Tibial artery (tissue), 4 donors: ENCODE measurements at regions of chr18 and their contacts with region 1.

Region 1: GRCh38 chr18:32349728-32350395 is 120.8 kb downstream of the GAREM1 start:
- DNase-seq: peak; percentile 82 to 85
- H3K4me3 ChIP-seq: peak overlapping the region; percentile 34
- H3K27ac ChIP-seq: peak overlapping the region; percentile 68 to 69
- H3K4me1 ChIP-seq: peaks cover 0 to 62% (median 29%) of the 10 kb centered on the region in 4 donors
- H3K27me3 ChIP-seq: no peaks in the 10 kb centered on the region
- CTCF ChIP-seq: no peak

Region 2: DNA sequence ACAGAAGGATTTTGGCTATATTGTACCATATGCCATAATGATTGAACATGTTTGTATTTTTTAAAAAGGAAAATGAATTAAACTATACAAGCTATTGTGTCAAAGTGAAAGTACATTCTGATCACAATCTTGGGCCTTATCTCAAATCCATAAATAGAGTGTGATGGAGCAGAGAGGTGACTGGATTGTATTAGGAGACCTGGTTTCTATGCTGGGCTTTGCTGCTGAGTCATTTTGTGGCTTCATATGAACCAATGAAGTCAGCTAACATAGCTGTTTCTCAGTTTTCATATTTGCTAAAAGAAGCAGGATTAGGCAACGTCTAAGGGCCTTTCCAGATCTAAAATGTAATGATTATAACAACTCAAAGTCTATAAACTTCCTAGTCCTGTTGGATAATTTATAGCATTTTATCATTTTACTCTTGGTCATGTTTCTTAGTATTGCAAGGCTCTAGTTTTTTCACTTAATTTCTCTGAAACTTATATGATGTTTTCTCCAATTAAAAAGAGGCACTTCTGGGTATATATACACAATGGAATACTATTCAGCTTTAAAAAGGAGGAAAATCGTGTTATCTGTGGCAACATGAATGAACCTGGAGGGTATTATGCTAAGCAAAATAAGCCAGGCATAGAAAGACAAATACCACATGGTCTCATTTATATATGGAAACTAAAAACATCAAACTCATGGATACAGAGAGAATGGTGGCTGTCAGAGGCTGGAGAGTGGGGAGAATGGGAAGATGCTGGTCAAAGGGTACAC is 47.7 kb before region 1 on chr18:
- intact Hi-C with region 1: loop called (anchors 10 kb)
- DNase-seq: no peak
- H3K4me3 ChIP-seq: no peak overlapping the region
- H3K27ac ChIP-seq: peak overlapping the region; percentile 70 to 73
- H3K4me1 ChIP-seq: peaks cover 0 to 57% (median 21%) of the 10 kb centered on the region in 4 donors
- H3K27me3 ChIP-seq: no peaks in the 10 kb centered on the region
- CTCF ChIP-seq: no peak